GM12878 (cell line): ENCODE measurements at regions of chr2 and their contacts with region 1.

Region 1: GRCh38 chr2:237674731-237675276 is 47.4 kb downstream of the LRRFIP1 start:
- DNase-seq: peak; percentile 77
- ATAC-seq: peak; percentile 92
- H3K4me3 ChIP-seq: peak overlapping the region; percentile 10; the same call in 1 of the 2 replicates
- H3K27ac ChIP-seq: peak overlapping the region; percentile 62
- H3K4me1 ChIP-seq: peaks cover 52% of the 10 kb centered on the region
- H3K27me3 ChIP-seq: no peaks in the 10 kb centered on the region
- CTCF ChIP-seq: no peak
- EP300 ChIP-seq: peak; percentile 56 to 67; a peak in 3 of 4 replicates
- POLR2A ChIP-seq: no peak
- RAD21 ChIP-seq: no peak

Region 2: DNA sequence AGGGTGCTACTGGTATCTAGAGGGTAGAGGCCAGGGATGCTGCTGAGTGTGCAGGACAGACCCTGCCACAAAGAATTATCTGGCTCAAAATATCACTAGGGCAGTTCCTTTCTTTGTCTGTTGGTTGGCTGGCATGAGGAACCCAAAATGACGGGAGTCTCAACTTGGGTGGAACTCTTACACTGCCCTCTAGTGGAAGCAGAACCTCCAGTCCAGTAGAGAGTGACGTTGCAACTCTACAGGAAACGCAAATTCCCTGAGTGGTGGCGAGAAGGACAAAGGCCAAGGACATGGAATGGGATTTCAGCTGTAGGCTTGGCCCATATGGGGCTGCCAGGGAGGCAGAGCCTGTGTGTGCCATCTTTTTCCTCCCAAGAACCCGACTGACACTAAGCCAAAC is 542.0 kb before region 1 on chr2:
- CTCF ChIA-PET with region 1: no interaction called
- POLR2A ChIA-PET with region 1: no interaction called
- RAD21 ChIA-PET with region 1: no interaction called
- SMC1A ChIA-PET with region 1: no interaction called
- in situ Hi-C with region 1: no loop called
- intact Hi-C with region 1: no loop called
- DNase-seq: no peak
- ATAC-seq: peak; percentile 63
- H3K4me3 ChIP-seq: no peak overlapping the region
- H3K27ac ChIP-seq: no peak overlapping the region
- H3K4me1 ChIP-seq: no peaks in the 10 kb centered on the region
- H3K27me3 ChIP-seq: no peaks in the 10 kb centered on the region
- CTCF ChIP-seq: peak; percentile 43 to 52 (median 50); a peak in 5 of 6 replicates
- EP300 ChIP-seq: no peak
- POLR2A ChIP-seq: no peak
- RAD21 ChIP-seq: 0 out of 2 replicates have a peak, but pooled peaks have one; percentile 16

Region 3: GRCh38 chr2:237581751-237582746 is 92.8 kb before region 1 on chr2:
- CTCF ChIA-PET with region 1: interaction called, 21 read pairs
- POLR2A ChIA-PET with region 1: no interaction called
- RAD21 ChIA-PET with region 1: no interaction called
- SMC1A ChIA-PET with region 1: interaction called, 6 read pairs
- in situ Hi-C with region 1: no loop called
- intact Hi-C with region 1: no loop called
- DNase-seq: peak; percentile 35
- ATAC-seq: peak; percentile 90
- H3K4me3 ChIP-seq: no peak overlapping the region
- H3K27ac ChIP-seq: no peak overlapping the region
- H3K4me1 ChIP-seq: no peaks in the 10 kb centered on the region
- H3K27me3 ChIP-seq: no peaks in the 10 kb centered on the region; a peak in 1 of 4 replicates
- CTCF ChIP-seq: peak; percentile 38 to 73 (median 53); a peak in 5 of 6 replicates
- EP300 ChIP-seq: no peak
- POLR2A ChIP-seq: no peak
- RAD21 ChIP-seq: peak; percentile 72

Region 4: GRCh38 chr2:237691908-237692600 is 17.2 kb after region 1 on chr2:
- CTCF ChIA-PET with region 1: interaction called, 298 read pairs
- POLR2A ChIA-PET with region 1: interaction called, 23 read pairs
- RAD21 ChIA-PET with region 1: interaction called, 209 read pairs
- SMC1A ChIA-PET with region 1: interaction called, 155 read pairs
- in situ Hi-C with region 1: no loop called
- intact Hi-C with region 1: loop called (anchors 1 kb)
- DNase-seq: no peak
- ATAC-seq: peak; percentile 75
- H3K4me3 ChIP-seq: peak overlapping the region; percentile 90
- H3K27ac ChIP-seq: peak overlapping the region; percentile 90
- H3K4me1 ChIP-seq: peaks cover 15% of the 10 kb centered on the region
- H3K27me3 ChIP-seq: no peaks in the 10 kb centered on the region
- CTCF ChIP-seq: no peak
- EP300 ChIP-seq: no peak; a peak in 1 of 4 replicates
- POLR2A ChIP-seq: peak; percentile 71
- RAD21 ChIP-seq: no peak

Region 5: DNA sequence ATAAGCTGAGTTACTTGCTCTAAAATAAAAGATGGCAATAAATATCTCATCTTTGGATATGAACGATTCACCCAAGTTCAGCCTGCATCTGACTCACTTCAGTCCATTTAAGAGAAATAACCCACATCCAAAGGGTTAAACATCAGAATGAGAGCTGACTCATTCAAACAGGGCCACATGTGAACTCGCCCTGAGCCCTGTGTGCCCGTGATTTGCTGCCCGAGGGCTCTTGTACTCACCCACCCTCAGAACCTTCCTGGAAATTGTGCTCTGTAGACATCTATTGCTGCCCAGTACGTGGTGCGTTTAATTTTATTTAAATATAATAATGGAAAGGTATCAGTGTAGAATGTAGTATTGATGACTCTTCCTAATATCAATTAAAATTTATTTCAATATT is 56.9 kb after region 1 on chr2:
- CTCF ChIA-PET with region 1: interaction called, 15 read pairs
- POLR2A ChIA-PET with region 1: interaction called, 3 read pairs
- RAD21 ChIA-PET with region 1: interaction called, 6 read pairs
- SMC1A ChIA-PET with region 1: interaction called, 21 read pairs
- in situ Hi-C with region 1: no loop called
- intact Hi-C with region 1: no loop called
- DNase-seq: no peak
- ATAC-seq: peak; percentile 41
- H3K4me3 ChIP-seq: no peak overlapping the region
- H3K27ac ChIP-seq: no peak overlapping the region
- H3K4me1 ChIP-seq: no peaks in the 10 kb centered on the region
- H3K27me3 ChIP-seq: no peaks in the 10 kb centered on the region
- CTCF ChIP-seq: no peak
- EP300 ChIP-seq: no peak
- POLR2A ChIP-seq: no peak
- RAD21 ChIP-seq: no peak

Region 6: DNA sequence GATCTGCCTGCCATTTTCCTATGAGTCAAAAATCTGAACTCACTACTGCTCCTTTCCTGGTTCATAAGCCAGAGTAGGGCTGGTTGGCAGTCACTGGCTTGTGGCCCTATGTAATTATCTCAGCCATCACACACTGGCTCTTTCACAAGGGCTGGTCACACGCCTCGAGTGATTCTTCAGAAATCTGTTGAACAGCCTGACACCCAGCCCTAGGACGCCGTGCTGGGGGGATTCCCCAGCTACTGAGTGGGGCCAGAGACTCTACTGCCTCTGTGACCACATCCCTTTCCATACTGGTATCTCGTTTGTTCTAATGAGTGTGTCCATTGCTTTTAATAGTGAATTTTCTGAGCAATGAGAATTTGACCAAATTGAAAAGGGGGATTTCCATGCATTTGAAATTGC is 78.0 kb after region 1 on chr2:
- CTCF ChIA-PET with region 1: interaction called, 209 read pairs
- POLR2A ChIA-PET with region 1: interaction called, 3 read pairs
- RAD21 ChIA-PET with region 1: interaction called, 114 read pairs
- SMC1A ChIA-PET with region 1: interaction called, 151 read pairs
- in situ Hi-C with region 1: no loop called
- intact Hi-C with region 1: no loop called
- DNase-seq: peak; percentile 83
- ATAC-seq: peak; percentile 100
- H3K4me3 ChIP-seq: no peak overlapping the region
- H3K27ac ChIP-seq: peak overlapping the region; percentile 88
- H3K4me1 ChIP-seq: peaks cover 14% of the 10 kb centered on the region
- H3K27me3 ChIP-seq: no peaks in the 10 kb centered on the region
- CTCF ChIP-seq: no peak
- EP300 ChIP-seq: peak; percentile 40 to 60; a peak in 2 of 4 replicates
- POLR2A ChIP-seq: no peak
- RAD21 ChIP-seq: no peak